Ascending aorta (tissue), 2 donors: ENCODE measurements at regions of chr17 and their contacts with region 1.

Region 1: DNA sequence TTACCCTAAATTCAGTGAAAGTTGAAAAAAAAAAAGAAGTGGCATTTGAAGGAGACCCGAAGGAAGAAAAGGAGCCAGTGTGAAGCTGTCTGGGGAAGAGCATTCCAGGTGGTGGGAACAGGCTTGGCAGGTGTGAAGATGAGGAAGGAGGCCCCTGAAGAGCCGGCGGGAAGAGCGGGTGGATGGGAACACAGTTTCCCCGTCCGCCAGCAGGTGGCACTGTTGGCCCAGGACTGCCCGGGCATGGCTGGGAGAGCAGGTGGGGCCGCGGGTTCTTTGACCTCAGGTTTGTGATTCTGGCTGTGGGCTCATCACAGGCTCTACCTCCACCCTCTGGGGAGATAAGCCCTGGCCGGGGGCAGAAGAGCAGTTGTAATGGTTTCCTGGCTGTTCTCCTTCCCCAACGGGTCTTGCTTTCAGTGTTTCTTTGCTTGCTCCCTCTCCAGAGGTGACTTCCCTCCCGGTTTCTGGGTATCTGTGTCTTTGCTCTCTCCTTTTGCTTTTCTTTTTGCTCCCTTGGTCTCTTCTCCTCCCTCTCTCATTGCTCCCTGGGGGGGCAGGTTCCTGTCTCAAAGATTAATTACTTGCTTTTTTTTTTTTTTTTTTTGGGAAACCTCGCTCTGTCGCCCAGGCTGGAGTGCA is 32.3 kb downstream of the RAP1GAP2 start:
- DNase-seq: no peak
- H3K4me3 ChIP-seq: no peak overlapping the region
- H3K27ac ChIP-seq: no peak overlapping the region
- H3K4me1 ChIP-seq: peaks cover 0 to 3% of the 10 kb centered on the region in 2 donors
- H3K27me3 ChIP-seq: no peaks in the 10 kb centered on the region
- CTCF ChIP-seq: peak; percentile 83 to 90 (median 87)

Region 2: DNA sequence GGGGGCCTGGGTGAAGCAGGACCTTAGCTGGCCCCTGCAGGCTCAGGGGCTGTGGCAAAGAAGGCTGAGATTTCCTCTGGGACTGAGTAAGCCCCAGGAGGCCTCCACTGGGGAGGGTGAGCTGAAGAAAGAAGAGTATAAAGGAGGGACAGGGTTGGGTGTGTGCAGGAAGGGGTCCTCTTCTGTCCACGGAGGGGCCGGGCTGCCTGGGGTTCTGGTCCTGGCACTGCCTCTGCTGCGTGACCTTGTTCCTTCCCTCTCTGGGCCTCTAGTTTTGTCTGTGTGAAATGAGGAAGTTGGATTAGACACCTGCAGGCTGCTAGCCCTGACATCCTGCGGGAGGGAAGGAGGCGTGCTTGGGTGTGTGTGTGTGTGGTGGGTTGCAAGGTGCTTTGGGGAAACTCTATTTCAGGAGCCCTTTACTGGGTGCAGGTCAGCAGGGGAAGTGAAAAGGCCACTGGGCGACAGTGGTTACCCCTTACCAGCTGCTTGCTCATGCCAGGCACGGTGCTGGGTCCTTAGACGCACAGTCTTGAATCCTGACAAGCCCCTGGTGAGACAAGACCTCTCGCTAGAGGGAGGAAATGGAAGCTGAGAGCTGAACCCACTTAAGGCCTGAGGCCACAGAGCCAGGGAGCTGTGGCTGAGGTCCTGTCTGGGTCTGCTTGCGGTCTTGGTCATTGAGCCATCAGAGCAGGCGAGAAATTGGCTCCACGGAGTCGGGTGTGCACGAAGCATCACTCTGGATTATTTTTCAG is 174.2 kb after region 1 on chr17:
- intact Hi-C with region 1: no loop called
- DNase-seq: no peak
- H3K4me3 ChIP-seq: no peak overlapping the region
- H3K27ac ChIP-seq: peak overlapping the region; percentile 88 to 95
- H3K4me1 ChIP-seq: peaks cover 10 to 11% of the 10 kb centered on the region in 2 donors
- H3K27me3 ChIP-seq: no peaks in the 10 kb centered on the region
- CTCF ChIP-seq: no peak

Region 3: DNA sequence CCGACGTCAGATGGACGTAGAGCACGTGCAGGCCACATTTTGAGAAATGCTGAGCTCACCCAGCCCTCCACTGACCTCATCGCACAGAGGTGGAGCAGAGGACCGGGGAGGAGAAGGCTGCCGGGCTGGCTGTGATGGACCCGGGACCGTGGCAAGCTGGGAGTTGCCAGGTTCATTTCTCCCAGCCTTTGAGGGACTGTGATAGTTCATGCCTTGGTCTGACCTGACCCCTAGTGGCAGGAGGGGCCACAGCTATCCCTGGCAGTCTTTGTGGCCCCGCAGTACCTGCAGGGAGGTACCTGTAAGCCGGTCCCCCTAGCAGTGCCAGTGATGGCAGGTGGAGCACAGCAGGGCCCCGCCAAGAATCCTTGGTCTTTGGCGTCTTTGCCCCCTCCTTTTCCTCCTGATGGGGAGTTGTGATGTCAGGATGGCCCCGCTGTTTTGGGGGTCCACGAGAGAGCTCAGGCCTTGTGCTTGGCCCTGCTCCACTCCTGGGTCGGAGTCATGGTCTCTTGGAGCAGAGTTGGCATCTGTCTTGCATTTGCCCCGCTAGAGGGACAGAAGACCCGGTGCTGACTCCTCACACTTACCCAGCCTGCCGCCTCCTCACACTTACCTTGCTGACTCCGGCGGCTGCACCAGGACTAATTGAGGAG is 184.5 kb after region 1 on chr17:
- intact Hi-C with region 1: loop called (anchors 1 kb)
- DNase-seq: peak in 1 of 2 donors; percentile 72
- H3K4me3 ChIP-seq: no peak overlapping the region
- H3K27ac ChIP-seq: no peak overlapping the region
- H3K4me1 ChIP-seq: no peaks in the 10 kb centered on the region
- H3K27me3 ChIP-seq: no peaks in the 10 kb centered on the region
- CTCF ChIP-seq: peak; percentile 65 to 83 (median 80)

Region 4: GRCh38 chr17:3659541-3660111 is 831.1 kb after region 1 on chr17:
- intact Hi-C with region 1: no loop called
- DNase-seq: peak; percentile 40 to 88
- H3K4me3 ChIP-seq: no peak overlapping the region
- H3K27ac ChIP-seq: peak overlapping the region; percentile 74 to 87
- H3K4me1 ChIP-seq: peaks cover 9 to 18% of the 10 kb centered on the region in 2 donors
- H3K27me3 ChIP-seq: no peaks in the 10 kb centered on the region
- CTCF ChIP-seq: peak in 1 of 3 experiments; percentile 16